ENCODE measurements at regions of chr10 and their contacts with region 1.

Region 1: DNA sequence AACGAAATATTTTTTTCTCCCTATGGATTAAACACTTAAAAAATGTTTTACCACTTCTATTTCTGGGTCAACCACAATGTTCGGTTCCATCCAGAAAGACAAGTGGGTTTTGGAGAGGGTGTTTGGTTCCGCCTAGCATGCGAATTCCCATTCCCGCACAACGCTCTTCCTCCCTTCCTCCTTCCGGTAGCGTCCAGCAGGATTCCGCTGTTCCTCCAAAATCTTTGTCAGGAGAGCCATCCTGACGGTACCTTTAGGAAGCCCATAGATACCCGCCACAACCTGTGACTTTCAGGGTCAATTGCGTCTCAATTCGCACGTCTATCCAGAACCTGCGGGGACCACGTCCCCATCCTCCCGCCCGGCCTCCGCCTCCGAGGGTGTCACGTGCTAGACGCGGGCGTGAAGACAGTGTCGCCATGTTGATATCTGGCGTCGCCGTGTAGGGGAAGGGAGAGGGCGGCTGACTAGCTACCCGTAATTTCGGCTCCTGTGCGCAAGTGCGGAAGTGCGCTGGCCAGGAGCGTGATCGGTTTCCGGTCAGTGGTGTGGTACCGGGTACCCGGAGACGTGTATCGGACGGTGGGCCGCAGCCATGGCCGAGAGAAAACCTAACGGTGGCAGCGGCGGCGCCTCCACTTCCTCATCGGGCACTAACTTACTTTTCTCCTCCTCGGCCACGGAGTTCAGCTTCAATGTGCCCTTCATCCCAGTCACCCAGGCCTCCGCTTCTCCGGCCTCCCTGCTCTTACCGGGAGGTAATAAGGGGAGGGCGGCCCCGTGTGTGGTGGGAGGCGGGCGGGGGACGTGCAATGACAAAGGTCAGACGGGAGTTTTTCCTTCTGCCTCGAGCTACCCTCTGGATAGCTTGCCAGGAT is at the start of gene SEC23IP:
- DNase-seq: peak; percentile 94
- H3K4me3 Mint-ChIP-seq: peak within 1 kb of the TSS; percentile 92
- H3K27ac Mint-ChIP-seq: peak within 1 kb of the TSS; percentile 96
- H3K4me1 Mint-ChIP-seq: peaks cover 40% of the 10 kb centered on the region
- H3K27me3 Mint-ChIP-seq: no peaks in the 10 kb centered on the region
- total RNA-seq, gene SEC23IP: 61.6 to 73.0 TPM

Region 2: DNA sequence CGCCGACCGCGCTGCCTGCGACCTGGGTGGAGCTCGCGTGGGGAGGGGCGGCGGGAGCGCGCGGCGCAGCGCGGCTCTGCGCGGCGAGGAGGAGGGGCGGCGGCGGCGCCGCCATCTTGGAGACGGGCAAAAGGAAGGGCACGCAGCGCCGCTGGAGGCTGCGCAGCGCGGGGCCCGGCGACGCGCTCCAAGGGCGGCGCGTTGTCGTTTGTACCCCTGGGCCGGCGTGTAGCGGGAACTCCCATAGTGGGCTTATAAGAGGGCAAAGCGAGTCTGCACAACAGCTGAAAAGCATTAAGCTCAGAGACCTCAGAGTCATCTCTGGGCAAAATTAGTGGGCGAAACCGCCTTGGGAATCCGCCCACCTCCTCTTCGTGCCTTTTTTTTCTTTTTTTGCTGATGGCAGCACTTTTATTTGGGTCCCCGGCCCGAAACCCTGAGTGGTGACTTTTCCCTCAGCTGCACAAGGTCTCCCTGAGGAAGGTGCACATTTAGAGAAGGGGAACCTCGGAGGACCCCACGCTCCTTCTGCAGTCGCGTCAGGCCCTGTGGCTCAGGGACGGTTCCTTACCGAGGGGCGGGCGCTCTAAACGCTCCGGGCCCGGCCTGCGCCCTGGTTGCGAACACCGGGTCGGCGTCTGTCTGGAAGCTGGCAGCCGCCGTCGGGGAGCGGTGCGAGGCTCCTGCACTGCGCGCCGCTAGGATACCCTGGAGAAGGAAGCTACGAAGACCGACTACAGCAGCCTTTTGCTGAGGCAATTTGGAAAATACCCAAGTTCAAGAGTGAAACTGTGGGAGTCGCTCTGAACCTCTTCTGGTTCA is 19.4 kb before region 1 on chr10:
- CTCF ChIA-PET with region 1: interaction called, 15 read pairs
- POLR2A ChIA-PET with region 1: no interaction called
- DNase-seq: peak; percentile 88
- H3K4me3 Mint-ChIP-seq: peak overlapping the region; percentile 81
- H3K27ac Mint-ChIP-seq: peak overlapping the region; percentile 92
- H3K4me1 Mint-ChIP-seq: peaks cover 32% of the 10 kb centered on the region
- H3K27me3 Mint-ChIP-seq: peaks cover 4% of the 10 kb centered on the region

Region 3: GRCh38 chr10:119940487-119940886 is 48.1 kb after region 1 on chr10:
- CTCF ChIA-PET with region 1: no interaction called
- POLR2A ChIA-PET with region 1: no interaction called
- DNase-seq: no peak
- H3K4me3 Mint-ChIP-seq: no peak overlapping the region
- H3K27ac Mint-ChIP-seq: no peak overlapping the region
- H3K4me1 Mint-ChIP-seq: peaks cover 7% of the 10 kb centered on the region
- H3K27me3 Mint-ChIP-seq: no peaks in the 10 kb centered on the region

Measured in activated CD4-positive, alpha-beta T cell treated with anti-CD3 and anti-CD28 coated beads, Interleukin-2, amount 10 ng/mL, durations not matched to agents 7 days and 5 days (primary cell).